ENCODE measurements at regions of chr7 and their contacts with region 1.

Region 1: GRCh38 chr7:82017334-82017943 is 247.6 kb upstream of the HGF start:
- DNase-seq: no peak
- H3K4me3 Mint-ChIP-seq: no peak overlapping the region
- H3K27ac Mint-ChIP-seq: no peak overlapping the region
- H3K4me1 Mint-ChIP-seq: peaks cover 8% of the 10 kb centered on the region
- H3K27me3 Mint-ChIP-seq: no peaks in the 10 kb centered on the region
- CTCF ChIP-seq: no peak

Region 2: DNA sequence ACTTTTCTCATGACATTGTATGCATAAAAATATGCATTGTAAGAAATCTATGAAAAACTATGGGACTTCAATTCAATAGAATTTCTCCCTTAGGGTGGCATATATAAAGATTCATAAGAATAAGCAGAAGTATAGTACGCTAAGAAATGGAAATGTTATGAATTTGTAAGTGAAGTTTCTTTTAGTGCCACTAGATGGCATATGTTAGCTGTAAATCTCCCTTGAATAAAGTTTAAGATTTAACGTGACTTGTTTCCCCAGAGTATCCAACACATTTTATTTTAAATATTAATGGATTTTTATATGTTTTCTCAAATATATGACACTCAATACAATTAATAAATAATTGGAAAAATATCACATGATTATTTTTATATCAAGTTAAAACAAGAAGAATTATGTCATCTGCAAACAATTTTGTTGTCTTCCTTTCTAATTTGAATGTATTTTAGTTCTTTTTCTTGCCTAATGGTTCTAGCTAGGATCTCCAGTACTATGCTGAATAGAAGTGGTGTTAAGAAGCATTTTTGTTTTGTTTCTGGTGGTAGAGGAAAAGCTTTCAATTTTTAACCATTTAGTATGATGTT is 534.7 kb before region 1 on chr7:
- CTCF ChIA-PET with region 1: no interaction called
- intact Hi-C with region 1: loop called (anchors 5 kb)
- DNase-seq: no peak
- H3K4me3 Mint-ChIP-seq: no peak overlapping the region
- H3K27ac Mint-ChIP-seq: no peak overlapping the region
- H3K4me1 Mint-ChIP-seq: no peaks in the 10 kb centered on the region
- H3K27me3 Mint-ChIP-seq: no peaks in the 10 kb centered on the region
- CTCF ChIP-seq: no peak

Region 3: DNA sequence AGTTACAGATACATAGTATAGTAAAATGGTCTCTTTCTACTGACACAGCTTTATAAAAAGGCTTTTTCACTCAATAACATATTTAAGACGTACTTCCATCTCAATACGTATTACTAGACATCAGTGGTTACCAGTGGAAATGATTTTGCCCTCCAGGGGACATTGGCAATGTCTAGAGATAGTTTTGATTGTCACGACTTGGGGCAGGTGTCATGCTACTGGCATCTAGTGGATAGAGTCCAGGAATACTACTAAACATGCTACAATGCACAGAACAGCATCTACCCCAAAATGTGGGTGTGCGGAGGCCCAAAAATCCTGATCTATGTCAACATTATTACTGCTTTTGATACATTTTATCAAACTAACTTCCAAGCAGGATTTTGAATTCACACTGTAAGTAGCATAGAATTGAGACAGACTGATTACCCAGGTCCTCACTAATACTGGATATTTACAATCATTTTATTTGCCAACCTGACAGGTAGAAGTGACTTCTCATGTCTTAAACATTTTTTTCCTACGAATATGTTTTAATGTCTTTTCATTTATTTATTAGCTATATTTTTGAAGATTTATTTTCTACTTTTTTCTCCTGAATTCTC is 301.4 kb before region 1 on chr7:
- CTCF ChIA-PET with region 1: no interaction called
- intact Hi-C with region 1: loop called (anchors 5 kb)
- DNase-seq: peak; percentile 18
- H3K4me3 Mint-ChIP-seq: no peak overlapping the region
- H3K27ac Mint-ChIP-seq: no peak overlapping the region
- H3K4me1 Mint-ChIP-seq: no peaks in the 10 kb centered on the region
- H3K27me3 Mint-ChIP-seq: no peaks in the 10 kb centered on the region
- CTCF ChIP-seq: peak; percentile 41